A549 (cell line): ENCODE measurements at regions of chr15 and their contacts with region 1.

Region 1: GRCh38 chr15:51869070-51869425 is 39.6 kb downstream of the TMOD3 start:
- DNase-seq: peak; percentile 70 to 95
- ATAC-seq: peak; percentile 78 to 87
- H3K4me3 ChIP-seq: peak overlapping the region; percentile 32
- H3K27ac ChIP-seq: peak overlapping the region; percentile 89
- H3K4me1 ChIP-seq: peaks cover 76% of the 10 kb centered on the region
- CTCF ChIP-seq: no peak
- EP300 ChIP-seq: peak; percentile 59 to 82; a peak in 3 of 5 replicates
- POLR2A ChIP-seq: no peak
- RAD21 ChIP-seq: peak in 1 of 2 experiments; percentile 25; a peak in 2 of 5 replicates

Region 2: GRCh38 chr15:51853998-51854397 is 15.1 kb before region 1 on chr15:
- CTCF ChIA-PET with region 1: interaction called, 48 read pairs
- POLR2A ChIA-PET with region 1: interaction called, 4 read pairs
- DNase-seq: no peak
- ATAC-seq: peak in 1 of 2 experiments; percentile 17; a peak in 2 of 6 replicates
- H3K4me3 ChIP-seq: no peak overlapping the region
- H3K27ac ChIP-seq: peak overlapping the region; percentile 24 to 65; a peak in 4 of 6 replicates
- H3K4me1 ChIP-seq: peaks cover 95% of the 10 kb centered on the region
- CTCF ChIP-seq: no peak
- EP300 ChIP-seq: no peak
- POLR2A ChIP-seq: no peak
- RAD21 ChIP-seq: no peak